ENCODE measurements at regions of chr15 and their contacts with region 1.

Region 1: GRCh38 chr15:74615508-74616365 is at the start of gene CLK3:
- DNase-seq: peak; percentile 97
- H3K4me3 Mint-ChIP-seq: peak within 1 kb of the TSS; percentile 96
- H3K27ac Mint-ChIP-seq: peak within 1 kb of the TSS; percentile 97
- H3K4me1 Mint-ChIP-seq: peaks cover 48% of the 10 kb centered on the region
- H3K27me3 Mint-ChIP-seq: no peaks in the 10 kb centered on the region
- total RNA-seq, gene CLK3: 133 to 136 TPM

Region 2: GRCh38 chr15:74540761-74541493 is 74.8 kb before region 1 on chr15 and contains the start of gene ARID3B:
- CTCF ChIA-PET with region 1: interaction called, 6 read pairs
- POLR2A ChIA-PET with region 1: interaction called, 86 read pairs
- DNase-seq: peak; percentile 97
- H3K4me3 Mint-ChIP-seq: peak within 1 kb of the TSS; percentile 99
- H3K27ac Mint-ChIP-seq: peak within 1 kb of the TSS; percentile 96
- H3K4me1 Mint-ChIP-seq: peaks cover 58% of the 10 kb centered on the region
- H3K27me3 Mint-ChIP-seq: no peaks in the 10 kb centered on the region
- total RNA-seq, gene ARID3B: 49.2 to 52.1 TPM

Region 3: GRCh38 chr15:74552773-74553441 is 62.8 kb before region 1 on chr15:
- CTCF ChIA-PET with region 1: interaction called, 4 read pairs
- POLR2A ChIA-PET with region 1: interaction called, 12 read pairs
- DNase-seq: peak; percentile 43
- H3K4me3 Mint-ChIP-seq: peak overlapping the region; percentile 45
- H3K27ac Mint-ChIP-seq: peak overlapping the region; percentile 82
- H3K4me1 Mint-ChIP-seq: peaks cover 73% of the 10 kb centered on the region
- H3K27me3 Mint-ChIP-seq: no peaks in the 10 kb centered on the region

Region 4: GRCh38 chr15:74604983-74605794 is 10.5 kb before region 1 on chr15:
- CTCF ChIA-PET with region 1: no interaction called
- POLR2A ChIA-PET with region 1: interaction called, 55 read pairs
- DNase-seq: no peak
- H3K4me3 Mint-ChIP-seq: no peak overlapping the region
- H3K27ac Mint-ChIP-seq: no peak overlapping the region
- H3K4me1 Mint-ChIP-seq: peaks cover 2% of the 10 kb centered on the region
- H3K27me3 Mint-ChIP-seq: no peaks in the 10 kb centered on the region

Region 5: GRCh38 chr15:74635228-74635627 is 19.5 kb after region 1 on chr15:
- CTCF ChIA-PET with region 1: interaction called, 89 read pairs
- POLR2A ChIA-PET with region 1: interaction called, 14 read pairs
- DNase-seq: peak; percentile 81
- H3K4me3 Mint-ChIP-seq: no peak overlapping the region
- H3K27ac Mint-ChIP-seq: no peak overlapping the region
- H3K4me1 Mint-ChIP-seq: no peaks in the 10 kb centered on the region
- H3K27me3 Mint-ChIP-seq: no peaks in the 10 kb centered on the region

Region 6: GRCh38 chr15:74787251-74788041 is 171.7 kb after region 1 on chr15:
- CTCF ChIA-PET with region 1: interaction called, 5 read pairs
- POLR2A ChIA-PET with region 1: interaction called, 27 read pairs
- DNase-seq: peak; percentile 95
- H3K4me3 Mint-ChIP-seq: peak overlapping the region; percentile 85
- H3K27ac Mint-ChIP-seq: peak overlapping the region; percentile 97
- H3K4me1 Mint-ChIP-seq: peaks cover 62% of the 10 kb centered on the region
- H3K27me3 Mint-ChIP-seq: no peaks in the 10 kb centered on the region